PC-9 (cell line): ENCODE measurements at regions of chr1 and their contacts with region 1.

Region 1: DNA sequence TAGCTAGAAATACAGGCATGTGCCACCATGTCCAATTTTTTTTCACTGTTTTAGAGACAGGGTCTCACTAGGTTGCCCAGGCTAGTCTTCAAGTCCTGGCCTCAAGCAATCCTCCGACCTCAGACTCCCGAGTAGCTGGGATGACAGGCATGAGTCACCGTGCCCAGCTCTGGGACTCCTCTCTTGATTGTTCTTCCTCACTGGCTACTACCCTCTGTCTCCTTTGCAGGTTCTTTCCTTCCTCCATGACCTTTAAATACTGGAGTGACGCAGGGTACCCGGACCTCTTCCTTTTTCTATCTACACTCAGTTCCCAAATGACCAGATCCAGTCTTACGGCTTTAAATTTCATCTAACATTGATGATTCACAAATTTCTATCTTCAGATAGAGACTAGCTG is 34.9 kb downstream of the ASH1L start:
- DNase-seq: no peak
- H3K4me3 ChIP-seq: no peak overlapping the region
- H3K27ac ChIP-seq: no peak overlapping the region
- H3K4me1 ChIP-seq: no peaks in the 10 kb centered on the region
- H3K27me3 ChIP-seq: no peaks in the 10 kb centered on the region
- CTCF ChIP-seq: no peak

Region 2: GRCh38 chr1:155379631-155380090 is 148.0 kb before region 1 on chr1:
- CTCF ChIA-PET with region 1: no interaction called
- POLR2A ChIA-PET with region 1: no interaction called
- intact Hi-C with region 1: no loop called
- DNase-seq: no peak
- H3K4me3 ChIP-seq: no peak overlapping the region
- H3K27ac ChIP-seq: no peak overlapping the region
- H3K4me1 ChIP-seq: no peaks in the 10 kb centered on the region
- H3K27me3 ChIP-seq: no peaks in the 10 kb centered on the region
- CTCF ChIP-seq: no peak

Region 3: DNA sequence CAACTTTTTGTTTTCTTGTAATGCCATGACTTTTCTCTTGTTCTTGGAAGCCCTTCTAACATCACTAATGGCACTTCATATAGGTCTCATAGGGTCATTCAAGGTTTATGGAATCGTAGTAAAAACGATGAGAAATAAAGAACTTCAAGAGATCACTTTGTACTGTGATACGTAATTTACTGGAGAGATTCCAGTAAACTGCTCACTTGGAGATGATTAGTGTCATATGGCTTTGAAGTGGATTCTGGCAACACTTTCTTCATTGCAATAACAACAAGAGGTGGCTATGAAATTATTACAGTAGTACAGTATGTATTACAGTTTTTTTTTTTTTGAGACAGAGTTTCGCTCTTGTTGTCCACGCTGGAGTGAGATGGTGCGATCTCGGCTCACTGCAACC is 103.6 kb before region 1 on chr1:
- CTCF ChIA-PET with region 1: interaction called, 20 read pairs
- POLR2A ChIA-PET with region 1: no interaction called
- intact Hi-C with region 1: no loop called
- DNase-seq: no peak
- H3K4me3 ChIP-seq: no peak overlapping the region
- H3K27ac ChIP-seq: no peak overlapping the region
- H3K4me1 ChIP-seq: no peaks in the 10 kb centered on the region
- H3K27me3 ChIP-seq: no peaks in the 10 kb centered on the region
- CTCF ChIP-seq: no peak

Region 4: GRCh38 chr1:156020292-156021089 is 492.8 kb after region 1 on chr1 and contains the start of gene SSR2:
- CTCF ChIA-PET with region 1: no interaction called
- POLR2A ChIA-PET with region 1: no interaction called
- intact Hi-C with region 1: no loop called
- DNase-seq: peak; percentile 78 to 87
- H3K4me3 ChIP-seq: peak within 1 kb of the TSS; percentile 95
- H3K27ac ChIP-seq: no peak within 1 kb of the TSS
- H3K4me1 ChIP-seq: peaks cover 11% of the 10 kb centered on the region
- H3K27me3 ChIP-seq: no peaks in the 10 kb centered on the region
- CTCF ChIP-seq: no peak
- total RNA-seq, gene SSR2: 152 and 196 TPM in 2 replicates